AG04450 (cell line): ENCODE measurements at regions of chr5 and their contacts with region 1.

Region 1: DNA sequence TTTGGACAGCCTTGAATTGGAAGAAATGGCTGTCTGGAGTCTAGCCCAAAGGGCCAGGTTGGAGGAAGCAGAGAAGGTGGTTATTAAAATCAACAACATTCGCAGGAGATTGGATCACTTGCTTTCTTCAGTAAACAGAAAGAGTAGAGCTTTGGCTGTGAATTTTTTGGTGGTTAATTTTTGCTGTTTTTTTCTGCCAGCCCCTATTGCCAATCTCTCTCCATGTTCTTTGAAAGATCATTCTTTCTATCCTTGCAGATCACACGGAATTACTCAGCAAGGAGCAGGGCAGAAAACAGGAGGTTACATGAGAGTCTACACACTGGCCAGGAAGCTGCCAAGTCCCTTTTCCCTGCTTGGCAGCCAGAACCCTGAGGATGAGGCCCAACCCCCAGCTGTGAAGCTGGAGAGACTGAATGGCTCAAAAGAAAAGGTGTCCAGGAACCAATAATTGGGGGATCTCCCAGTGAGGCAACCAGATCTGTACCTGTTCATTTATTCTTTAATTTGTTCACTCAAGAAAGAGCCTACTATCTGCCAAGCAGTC is 13.0 kb downstream of the GLRX start:
- DNase-seq: no peak
- H3K4me3 ChIP-seq: no peak overlapping the region
- H3K27ac ChIP-seq: peak overlapping the region; percentile 55
- H3K27me3 ChIP-seq: no peaks in the 10 kb centered on the region
- CTCF ChIP-seq: no peak

Region 2: DNA sequence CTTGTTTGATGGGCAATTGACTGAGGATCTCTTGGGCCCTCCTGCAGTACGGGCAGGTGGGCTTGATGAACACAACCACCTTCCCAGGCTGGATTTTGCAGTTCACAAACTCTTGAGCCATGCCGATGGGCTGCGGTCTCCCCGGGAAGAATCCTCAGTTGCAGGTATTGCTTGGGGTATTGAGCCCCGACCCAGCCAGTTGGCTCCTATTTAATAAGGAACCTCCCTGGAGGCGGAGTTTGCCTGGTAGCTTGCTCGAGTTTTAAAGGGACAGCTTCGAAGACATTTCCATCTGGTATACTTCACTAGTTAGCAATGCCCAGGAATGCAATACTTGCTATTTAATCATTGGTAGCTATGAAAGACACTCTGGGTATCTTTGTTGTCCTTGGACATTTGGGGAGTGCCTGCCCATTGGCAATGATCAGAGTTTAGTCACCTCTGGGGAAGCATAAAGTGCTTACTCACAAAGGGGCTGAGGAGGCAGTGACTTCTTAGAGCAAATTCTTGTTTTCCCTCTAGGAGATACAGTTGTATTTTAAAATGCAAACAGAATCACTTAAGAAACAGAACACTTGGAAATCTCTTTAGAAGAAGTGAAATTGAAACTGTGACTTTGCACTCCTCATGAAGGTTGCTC is 13.2 kb after region 1 on chr5 and contains the start of gene GLRX:
- CTCF ChIA-PET with region 1: no interaction called
- POLR2A ChIA-PET with region 1: interaction called, 12 read pairs
- DNase-seq: peak; percentile 59
- H3K4me3 ChIP-seq: peak within 1 kb of the TSS; percentile 94
- H3K27ac ChIP-seq: peak within 1 kb of the TSS; percentile 100
- H3K27me3 ChIP-seq: no peaks in the 10 kb centered on the region
- CTCF ChIP-seq: no peak
- polyA plus RNA-seq, gene GLRX: 233 and 306 TPM in 2 replicates

Region 3: GRCh38 chr5:95973793-95974325 is 164.4 kb after region 1 on chr5:
- CTCF ChIA-PET with region 1: no interaction called
- POLR2A ChIA-PET with region 1: no interaction called
- DNase-seq: peak; percentile 44
- H3K4me3 ChIP-seq: no peak overlapping the region
- H3K27ac ChIP-seq: peak overlapping the region; percentile 83
- H3K27me3 ChIP-seq: no peaks in the 10 kb centered on the region
- CTCF ChIP-seq: no peak